ENCODE measurements at regions of chr7 and their contacts with region 1.

Region 1: GRCh38 chr7:2632733-2633537 is 1.1 kb downstream of the TTYH3 start:
- DNase-seq: peak in 8 of 9 donors; percentile 24 to 73 (median 37)
- ATAC-seq: no peak
- H3K4me3 ChIP-seq: peak overlapping the region; percentile 58
- H3K4me3 Mint-ChIP-seq: peak overlapping the region; percentile 86 to 96 (median 89)
- H3K27ac ChIP-seq: peak overlapping the region; percentile 79
- H3K27ac Mint-ChIP-seq: peak overlapping the region in 8 of 9 donors; percentile 72 to 88 (median 81)
- H3K4me1 ChIP-seq: peaks cover 3 to 16% of the 10 kb centered on the region in 2 donors
- H3K4me1 Mint-ChIP-seq: peaks cover 0 to 19% (median 15%) of the 10 kb centered on the region in 7 donors
- H3K27me3 ChIP-seq: no peaks in the 10 kb centered on the region
- H3K27me3 Mint-ChIP-seq: peaks cover 0 to 4% (median 0%) of the 10 kb centered on the region in 5 donors

Region 2: DNA sequence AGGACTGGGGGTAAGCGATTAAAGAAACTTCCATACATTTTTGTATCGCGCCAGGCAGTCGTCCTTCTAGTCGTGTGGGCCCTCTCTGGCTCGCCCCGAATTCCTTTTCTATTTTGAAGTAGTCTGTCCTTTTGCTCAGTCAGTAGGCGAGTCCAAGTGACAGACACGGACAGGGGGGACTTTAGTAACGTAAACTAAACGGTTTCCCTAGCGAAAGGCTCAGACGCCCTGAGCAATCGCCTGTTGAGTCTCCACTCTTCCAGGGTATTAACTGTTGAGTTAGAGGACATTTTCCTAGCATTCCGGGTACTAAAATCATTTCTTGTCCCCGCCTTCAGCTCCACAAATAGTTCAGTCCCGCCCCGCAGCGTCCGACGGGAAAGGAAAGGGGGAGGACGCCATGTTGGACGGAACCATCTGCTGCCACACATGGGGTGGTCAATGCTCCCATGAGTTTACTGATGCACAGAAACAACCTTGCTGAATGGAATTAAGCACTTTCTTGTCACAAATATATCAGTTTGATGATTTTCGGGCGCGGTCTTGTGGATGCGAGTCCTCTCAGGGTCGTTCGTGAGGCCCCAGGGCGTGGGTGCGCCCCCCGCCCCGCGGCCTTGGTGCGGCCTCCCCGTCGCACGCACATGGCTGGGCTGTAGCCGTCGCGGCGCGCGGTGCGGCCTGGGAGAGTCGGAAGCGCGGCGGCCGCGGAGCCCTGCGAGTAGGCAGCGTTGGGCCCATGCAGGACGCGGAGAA is 278.6 kb before region 1 on chr7 and contains the start of gene EIF3B:
- CTCF ChIA-PET with region 1: no interaction called
- POLR2A ChIA-PET with region 1: no interaction called
- intact Hi-C with region 1: loop called in 1 of 2 experiments (anchors 1 kb)
- DNase-seq: peak; percentile 87 to 97 (median 94)
- ATAC-seq: peak; percentile 90
- H3K4me3 ChIP-seq: peak within 1 kb of the TSS; percentile 89
- H3K4me3 Mint-ChIP-seq: peak within 1 kb of the TSS; percentile 90 to 100 (median 94)
- H3K27ac ChIP-seq: peak within 1 kb of the TSS; percentile 97
- H3K27ac Mint-ChIP-seq: peak within 1 kb of the TSS; percentile 98 to 100 (median 100)
- H3K4me1 ChIP-seq: peaks cover 25 to 38% of the 10 kb centered on the region in 2 donors
- H3K4me1 Mint-ChIP-seq: peaks cover 16 to 48% (median 31%) of the 10 kb centered on the region in 7 donors
- H3K27me3 ChIP-seq: no peaks in the 10 kb centered on the region
- H3K27me3 Mint-ChIP-seq: peaks cover 0 to 3% (median 0%) of the 10 kb centered on the region in 5 donors
- total RNA-seq, gene EIF3B: 127 to 189 (median 158) TPM

Region 3: DNA sequence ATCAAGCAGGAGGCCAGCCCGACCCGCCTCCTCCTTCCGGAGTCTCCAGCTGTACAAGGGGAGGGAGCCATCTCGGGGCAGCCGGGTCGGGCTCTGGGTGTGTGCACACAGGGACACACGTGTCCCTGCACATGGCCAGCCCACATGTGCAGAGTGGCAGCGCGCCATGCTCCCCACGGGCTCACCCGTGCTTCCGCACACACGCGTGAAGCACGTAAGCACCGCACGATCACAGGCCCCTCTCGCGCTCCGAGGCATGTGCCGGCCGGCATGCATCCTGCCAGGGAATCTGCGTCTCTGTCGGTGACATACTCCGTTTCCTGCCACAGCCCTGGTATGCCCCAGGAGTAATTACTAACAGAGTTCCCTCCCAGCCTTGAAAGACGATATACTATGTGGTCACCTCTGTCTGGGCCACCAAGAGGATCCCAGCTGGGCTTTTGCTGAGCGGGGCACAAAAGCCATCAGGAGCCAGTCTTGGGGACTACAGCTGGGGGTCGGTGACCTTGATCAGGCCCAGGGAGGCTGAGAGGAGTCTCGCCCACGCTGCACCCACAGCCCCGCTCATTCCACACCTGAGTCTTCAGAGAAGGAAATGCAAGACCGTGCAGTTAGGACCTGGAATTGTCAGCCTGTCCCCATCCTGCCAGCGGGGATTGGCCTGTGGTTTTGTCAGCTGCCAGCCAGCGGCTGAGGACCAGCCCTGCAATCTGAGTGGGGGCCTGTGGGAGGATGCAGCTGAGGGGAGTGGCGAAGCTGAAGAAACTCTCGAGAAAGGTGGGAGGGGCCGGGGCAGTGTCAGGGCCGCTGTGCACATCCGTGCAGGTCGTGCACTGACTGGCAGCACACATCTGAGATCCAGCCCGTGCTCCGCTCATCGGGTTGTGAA is 124.4 kb before region 1 on chr7:
- CTCF ChIA-PET with region 1: no interaction called
- POLR2A ChIA-PET with region 1: interaction called, 8 read pairs
- intact Hi-C with region 1: loop called in 1 of 2 experiments (anchors 1 kb)
- DNase-seq: peak; percentile 61 to 94 (median 93)
- ATAC-seq: peak; percentile 76
- H3K4me3 ChIP-seq: peak overlapping the region; percentile 61
- H3K4me3 Mint-ChIP-seq: peak overlapping the region in 9 of 10 donors; percentile 69 to 88 (median 84)
- H3K27ac ChIP-seq: peak overlapping the region; percentile 87
- H3K27ac Mint-ChIP-seq: peak overlapping the region in 7 of 9 donors; percentile 86 to 99 (median 97)
- H3K4me1 ChIP-seq: peaks cover 58 to 61% of the 10 kb centered on the region in 2 donors
- H3K4me1 Mint-ChIP-seq: peaks cover 36 to 69% (median 50%) of the 10 kb centered on the region in 7 donors
- H3K27me3 ChIP-seq: no peaks in the 10 kb centered on the region
- H3K27me3 Mint-ChIP-seq: no peaks in the 10 kb centered on the region

Region 4: DNA sequence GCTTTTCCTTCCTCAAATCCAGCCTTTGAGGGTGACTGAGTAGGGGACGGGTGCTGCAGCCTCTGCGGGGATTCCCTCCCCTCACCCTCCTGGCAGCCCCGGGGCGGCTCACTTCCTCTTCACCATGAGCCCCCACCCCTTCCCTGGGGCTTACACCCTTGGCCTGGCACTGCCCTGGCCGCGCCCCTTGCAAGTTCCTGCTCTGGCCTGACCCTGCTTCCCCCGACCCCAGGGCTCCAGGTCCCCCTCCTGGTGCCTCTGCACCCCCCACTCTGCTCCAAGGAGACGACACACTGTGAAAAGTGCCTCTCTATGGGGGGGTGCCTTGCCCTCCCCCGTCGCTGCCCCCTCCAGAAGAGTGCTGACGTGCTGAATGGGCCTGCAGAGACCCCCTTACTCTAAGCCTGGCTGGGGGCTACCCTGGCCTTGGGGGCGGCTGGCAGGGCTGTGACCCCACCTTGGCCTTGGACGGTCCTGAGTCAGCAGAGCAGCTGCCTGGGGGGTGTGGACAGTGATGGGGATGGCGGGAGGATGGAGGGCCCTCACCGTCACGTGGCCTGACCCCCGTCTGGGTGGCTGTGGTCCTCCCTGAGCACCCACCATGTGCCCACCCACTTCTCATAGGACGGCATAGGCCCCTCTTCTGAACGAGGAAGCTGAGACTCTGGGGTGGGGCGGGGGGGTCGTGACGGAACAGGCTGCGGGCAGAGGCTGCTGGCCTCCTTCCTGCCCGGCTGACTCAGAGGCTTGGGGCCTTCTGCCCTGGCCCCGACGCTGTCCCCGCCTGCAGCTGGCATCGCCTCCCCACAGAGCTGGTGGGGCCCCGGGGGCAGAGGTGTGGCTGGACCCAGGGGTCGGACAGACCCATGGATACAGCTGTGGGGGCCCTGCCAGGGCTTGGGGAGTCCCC is 103.5 kb before region 1 on chr7:
- CTCF ChIA-PET with region 1: no interaction called
- POLR2A ChIA-PET with region 1: no interaction called
- intact Hi-C with region 1: loop called in 1 of 2 experiments (anchors 1 kb)
- DNase-seq: peak in 7 of 9 donors; percentile 24 to 76 (median 52)
- ATAC-seq: peak; percentile 67
- H3K4me3 ChIP-seq: peak overlapping the region; percentile 57
- H3K4me3 Mint-ChIP-seq: peak overlapping the region; percentile 65 to 82 (median 76)
- H3K27ac ChIP-seq: peak overlapping the region; percentile 76
- H3K27ac Mint-ChIP-seq: peak overlapping the region; percentile 66 to 96 (median 91)
- H3K4me1 ChIP-seq: peaks cover 40 to 62% of the 10 kb centered on the region in 2 donors
- H3K4me1 Mint-ChIP-seq: peaks cover 33 to 58% (median 44%) of the 10 kb centered on the region in 7 donors
- H3K27me3 ChIP-seq: no peaks in the 10 kb centered on the region
- H3K27me3 Mint-ChIP-seq: no peaks in the 10 kb centered on the region

Region 5: GRCh38 chr7:2567679-2568278 is 65.2 kb before region 1 on chr7:
- CTCF ChIA-PET with region 1: no interaction called
- POLR2A ChIA-PET with region 1: no interaction called
- intact Hi-C with region 1: no loop called
- DNase-seq: peak in 4 of 9 donors; percentile 13 to 37 (median 20)
- ATAC-seq: peak; percentile 50
- H3K4me3 ChIP-seq: no peak overlapping the region
- H3K4me3 Mint-ChIP-seq: no peak overlapping the region
- H3K27ac ChIP-seq: no peak overlapping the region
- H3K27ac Mint-ChIP-seq: no peak overlapping the region
- H3K4me1 ChIP-seq: no peaks in the 10 kb centered on the region
- H3K4me1 Mint-ChIP-seq: peaks cover 3 to 15% (median 6%) of the 10 kb centered on the region in 7 donors
- H3K27me3 ChIP-seq: no peaks in the 10 kb centered on the region
- H3K27me3 Mint-ChIP-seq: no peaks in the 10 kb centered on the region

Region 6: DNA sequence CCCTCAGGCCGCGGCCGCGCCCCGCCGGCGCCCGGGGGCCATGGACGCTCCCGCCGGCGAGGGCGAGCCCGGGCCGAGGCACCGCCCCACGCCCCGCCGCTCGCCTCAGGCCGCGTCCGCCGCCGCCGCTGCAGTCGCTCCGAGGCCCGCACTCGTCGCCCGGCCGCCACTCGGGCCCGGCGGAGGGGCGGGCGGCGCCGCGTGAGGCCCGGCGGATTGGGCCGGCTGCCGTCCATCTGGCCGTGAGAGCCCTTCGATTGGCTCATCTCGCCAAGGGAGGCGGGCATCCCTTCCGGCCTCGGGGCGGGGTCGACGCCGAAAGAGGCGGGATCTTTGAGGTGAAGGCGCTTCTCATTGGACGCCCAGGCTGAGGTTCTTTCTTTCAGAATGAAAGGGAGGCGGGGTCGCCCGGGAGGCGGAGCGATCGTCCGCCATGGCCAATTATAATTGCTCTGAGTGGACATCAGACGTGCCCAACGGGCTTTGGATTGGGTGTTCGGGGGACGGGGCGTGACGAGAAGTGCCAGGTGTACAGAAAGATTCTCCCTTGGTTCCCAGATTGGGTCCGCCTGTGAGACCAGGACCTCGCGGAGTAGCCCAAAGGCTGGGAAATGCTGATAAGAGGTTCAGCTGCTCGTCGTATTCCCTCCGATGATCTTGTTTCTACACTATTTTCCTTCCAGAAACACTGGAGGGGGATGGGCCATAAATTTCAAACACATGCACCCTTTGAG is 211.4 kb after region 1 on chr7 and contains the start of gene GNA12:
- CTCF ChIA-PET with region 1: no interaction called
- POLR2A ChIA-PET with region 1: no interaction called
- intact Hi-C with region 1: loop called in 1 of 2 experiments (anchors 2 kb)
- DNase-seq: peak; percentile 94 to 98 (median 98)
- ATAC-seq: peak; percentile 97
- H3K4me3 ChIP-seq: peak within 1 kb of the TSS; percentile 70
- H3K4me3 Mint-ChIP-seq: peak within 1 kb of the TSS; percentile 86 to 98 (median 91)
- H3K27ac ChIP-seq: peak within 1 kb of the TSS; percentile 59
- H3K27ac Mint-ChIP-seq: peak within 1 kb of the TSS; percentile 2 to 89 (median 78)
- H3K4me1 ChIP-seq: peaks cover 12% of the 10 kb centered on the region in 2 donors
- H3K4me1 Mint-ChIP-seq: peaks cover 19 to 49% (median 44%) of the 10 kb centered on the region in 7 donors
- H3K27me3 ChIP-seq: no peaks in the 10 kb centered on the region
- H3K27me3 Mint-ChIP-seq: no peaks in the 10 kb centered on the region
- total RNA-seq, gene GNA12: 18.1 to 25.7 (median 21.0) TPM